CD4-positive, alpha-beta memory T cell (primary cell): ENCODE measurements at regions of chr1 and their contacts with region 1.

Region 1: DNA sequence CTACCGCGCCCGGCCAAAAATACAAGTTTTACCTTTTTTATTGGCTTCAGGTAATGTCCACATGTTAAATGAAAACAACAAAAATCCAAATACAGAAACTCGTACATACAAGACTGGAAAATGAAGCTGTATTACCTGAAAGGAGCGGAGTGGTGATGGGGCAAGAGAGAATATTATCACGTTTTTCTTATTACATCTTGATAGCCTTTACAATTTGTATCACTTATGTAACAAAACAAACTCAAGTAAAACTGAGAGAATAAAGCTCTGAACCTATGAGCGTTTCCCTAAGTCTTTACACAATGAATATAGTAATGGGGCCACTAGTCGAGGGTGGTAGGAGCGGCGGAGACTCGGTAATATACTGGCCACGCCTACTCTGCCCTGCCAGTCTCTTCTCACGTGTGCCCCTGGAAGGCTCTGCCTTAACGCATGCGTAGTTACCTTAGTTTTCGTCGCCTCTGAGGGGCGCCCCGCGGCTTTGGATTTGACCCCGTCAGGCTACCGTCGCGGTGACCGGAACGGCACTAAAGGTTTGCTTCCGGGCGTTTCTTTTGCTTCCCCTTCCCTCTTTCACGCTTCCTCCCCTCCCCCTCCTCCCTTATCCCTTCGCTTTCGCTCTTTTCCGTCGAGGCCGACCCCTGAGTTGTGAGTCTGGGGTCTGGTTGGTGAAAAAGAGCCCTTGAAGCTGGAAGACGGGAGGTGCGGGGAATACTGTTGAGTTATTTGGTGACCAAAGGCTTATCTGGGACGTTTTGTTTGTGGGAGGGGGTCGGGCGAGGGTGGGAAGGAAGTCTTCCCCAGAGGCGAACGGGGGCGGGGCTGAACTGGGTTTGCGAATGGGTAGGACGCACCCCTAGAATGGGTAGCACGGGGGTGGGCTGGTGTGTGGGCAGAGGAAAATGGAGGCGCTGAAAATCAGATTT is at the start of gene SETDB1:
- DNase-seq: peak; percentile 90 to 95 (median 90)
- H3K4me3 ChIP-seq: peak within 1 kb of the TSS; percentile 80 to 97
- H3K4me3 Mint-ChIP-seq: peak within 1 kb of the TSS; percentile 94 to 96 (median 96)
- H3K27ac ChIP-seq: peak within 1 kb of the TSS; percentile 80
- H3K27ac Mint-ChIP-seq: peak within 1 kb of the TSS; percentile 96 to 98 (median 96)
- H3K4me1 ChIP-seq: peaks cover 22% of the 10 kb centered on the region
- H3K4me1 Mint-ChIP-seq: peaks cover 18 to 38% (median 29%) of the 10 kb centered on the region in 4 donors
- H3K27me3 ChIP-seq: no peaks in the 10 kb centered on the region
- H3K27me3 Mint-ChIP-seq: no peaks in the 10 kb centered on the region
- total RNA-seq, gene SETDB1: 71.4 to 72.6 TPM

Region 2: GRCh38 chr1:150464422-150464826 is 461.7 kb before region 1 on chr1:
- CTCF ChIA-PET with region 1: interaction called, 6 read pairs
- POLR2A ChIA-PET with region 1: no interaction called
- intact Hi-C with region 1: loop called (anchors 1 kb)
- DNase-seq: peak; percentile 66 to 77 (median 70)
- H3K4me3 ChIP-seq: no peak overlapping the region
- H3K4me3 Mint-ChIP-seq: no peak overlapping the region
- H3K27ac ChIP-seq: no peak overlapping the region
- H3K27ac Mint-ChIP-seq: peak overlapping the region in 3 of 7 donors; percentile 0 to 88 (median 38)
- H3K4me1 ChIP-seq: no peaks in the 10 kb centered on the region
- H3K4me1 Mint-ChIP-seq: peaks cover 0 to 6% (median 4%) of the 10 kb centered on the region in 4 donors
- H3K27me3 ChIP-seq: no peaks in the 10 kb centered on the region
- H3K27me3 Mint-ChIP-seq: no peaks in the 10 kb centered on the region

Region 3: DNA sequence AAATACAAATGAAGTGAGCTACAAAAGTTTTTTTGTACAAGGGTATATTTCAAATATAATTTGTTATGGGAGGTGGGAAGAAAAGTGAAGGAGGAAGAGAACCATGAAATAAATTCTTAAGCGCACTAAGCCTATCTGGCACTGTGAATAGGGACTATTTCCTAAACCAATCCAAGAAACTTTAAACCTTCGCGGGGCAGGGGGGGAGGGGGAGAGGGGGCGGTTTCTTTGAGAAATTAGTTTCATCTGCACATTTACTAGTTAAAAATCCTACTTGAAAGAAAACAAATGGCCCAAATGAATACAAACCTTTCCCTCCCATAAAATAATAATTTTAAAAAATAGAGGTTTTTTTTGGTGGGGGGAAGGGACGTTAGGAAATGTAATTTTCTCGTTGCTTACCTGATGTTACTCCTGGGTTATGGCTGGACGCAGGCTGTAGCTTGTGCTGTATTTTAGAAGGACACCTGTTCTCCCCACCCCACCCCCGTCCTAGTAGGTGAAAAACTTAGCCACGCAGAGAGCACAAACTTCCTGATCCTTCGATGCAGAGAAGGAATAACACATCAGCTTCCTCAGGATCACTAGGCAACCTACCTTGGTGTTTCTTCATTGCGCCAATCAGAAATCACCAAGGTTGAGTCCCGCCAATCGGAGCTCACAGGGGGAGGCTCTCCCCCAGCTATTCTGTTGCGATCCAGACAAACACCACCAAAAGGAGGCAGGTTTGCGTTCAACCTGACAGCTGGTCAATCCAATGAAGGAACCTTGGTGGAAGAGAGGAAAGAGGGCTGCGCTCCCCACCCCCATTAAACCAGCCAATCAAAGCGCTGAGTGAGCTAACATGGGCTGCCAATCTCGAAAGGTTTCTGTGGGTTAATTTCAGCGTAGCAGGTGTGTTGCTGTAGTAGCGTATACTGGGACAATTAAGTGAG is 229.2 kb before region 1 on chr1 and contains the start of gene GOLPH3L:
- CTCF ChIA-PET with region 1: interaction called, 8 read pairs
- POLR2A ChIA-PET with region 1: interaction called, 5 read pairs
- intact Hi-C with region 1: loop called (anchors 1 kb)
- DNase-seq: peak; percentile 90 to 97 (median 93)
- H3K4me3 ChIP-seq: peak within 1 kb of the TSS; percentile 86 to 92
- H3K4me3 Mint-ChIP-seq: peak within 1 kb of the TSS; percentile 94 to 100 (median 98)
- H3K27ac ChIP-seq: peak within 1 kb of the TSS; percentile 70
- H3K27ac Mint-ChIP-seq: peak within 1 kb of the TSS; percentile 88 to 100 (median 96)
- H3K4me1 ChIP-seq: peaks cover 27% of the 10 kb centered on the region
- H3K4me1 Mint-ChIP-seq: peaks cover 17 to 40% (median 27%) of the 10 kb centered on the region in 4 donors
- H3K27me3 ChIP-seq: no peaks in the 10 kb centered on the region
- H3K27me3 Mint-ChIP-seq: peaks cover 1 to 3% of the 10 kb centered on the region in 2 donors
- total RNA-seq, gene GOLPH3L: 29.7 to 30.4 TPM

Region 4: GRCh38 chr1:150863724-150864123 is 62.4 kb before region 1 on chr1:
- CTCF ChIA-PET with region 1: no interaction called
- POLR2A ChIA-PET with region 1: no interaction called
- intact Hi-C with region 1: no loop called
- DNase-seq: no peak
- H3K4me3 ChIP-seq: no peak overlapping the region
- H3K4me3 Mint-ChIP-seq: no peak overlapping the region
- H3K27ac ChIP-seq: no peak overlapping the region
- H3K27ac Mint-ChIP-seq: peak overlapping the region in 1 of 7 donors; percentile 25
- H3K4me1 ChIP-seq: no peaks in the 10 kb centered on the region
- H3K4me1 Mint-ChIP-seq: peaks cover 12 to 20% (median 18%) of the 10 kb centered on the region in 4 donors
- H3K27me3 ChIP-seq: no peaks in the 10 kb centered on the region
- H3K27me3 Mint-ChIP-seq: no peaks in the 10 kb centered on the region

Region 5: DNA sequence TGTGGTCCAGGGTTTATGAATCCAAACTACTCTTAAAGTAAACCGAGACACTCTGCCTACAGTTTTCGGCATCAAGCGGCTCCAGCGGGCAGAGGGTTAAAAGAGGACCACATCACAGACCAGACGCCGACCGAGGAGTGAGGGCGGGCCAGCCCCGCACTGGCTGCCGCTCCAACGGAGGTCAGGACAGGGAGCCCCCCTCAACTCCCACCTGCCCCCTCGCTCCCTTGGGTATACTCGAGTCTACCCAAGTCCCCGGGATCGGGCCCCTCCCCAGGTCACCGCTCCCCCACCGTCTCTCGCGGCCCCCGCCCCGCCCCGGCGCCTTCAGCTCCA is 50.0 kb before region 1 on chr1:
- CTCF ChIA-PET with region 1: interaction called, 3 read pairs
- POLR2A ChIA-PET with region 1: interaction called, 4 read pairs
- intact Hi-C with region 1: loop called (anchors 1 kb)
- DNase-seq: no peak
- H3K4me3 ChIP-seq: peak overlapping the region; percentile 60 to 93
- H3K4me3 Mint-ChIP-seq: peak overlapping the region; percentile 88 to 97 (median 95)
- H3K27ac ChIP-seq: peak overlapping the region; percentile 81
- H3K27ac Mint-ChIP-seq: peak overlapping the region; percentile 88 to 97 (median 95)
- H3K4me1 ChIP-seq: peaks cover 25% of the 10 kb centered on the region
- H3K4me1 Mint-ChIP-seq: peaks cover 23 to 47% (median 35%) of the 10 kb centered on the region in 4 donors
- H3K27me3 ChIP-seq: no peaks in the 10 kb centered on the region
- H3K27me3 Mint-ChIP-seq: no peaks in the 10 kb centered on the region

Region 6: GRCh38 chr1:150995896-150996295 is 69.8 kb after region 1 on chr1:
- CTCF ChIA-PET with region 1: interaction called, 12 read pairs
- POLR2A ChIA-PET with region 1: no interaction called
- intact Hi-C with region 1: no loop called
- DNase-seq: peak in 3 of 5 donors; percentile 32 to 39 (median 38)
- H3K4me3 ChIP-seq: no peak overlapping the region
- H3K4me3 Mint-ChIP-seq: peak overlapping the region in 3 of 8 donors; percentile 10 to 57 (median 25)
- H3K27ac ChIP-seq: peak overlapping the region; percentile 10
- H3K27ac Mint-ChIP-seq: peak overlapping the region in 6 of 7 donors; percentile 70 to 89 (median 80)
- H3K4me1 ChIP-seq: peaks cover 12% of the 10 kb centered on the region
- H3K4me1 Mint-ChIP-seq: peaks cover 3 to 20% (median 13%) of the 10 kb centered on the region in 4 donors
- H3K27me3 ChIP-seq: no peaks in the 10 kb centered on the region
- H3K27me3 Mint-ChIP-seq: no peaks in the 10 kb centered on the region